CD4-positive, alpha-beta memory T cell (primary cell): ENCODE measurements at regions of chr1 and their contacts with region 1.

Region 1: GRCh38 chr1:41360993-41361753 is at the start of gene FOXO6:
- DNase-seq: peak; percentile 94 to 95 (median 95)
- H3K4me3 ChIP-seq: peak within 1 kb of the TSS; percentile 26 to 48
- H3K4me3 Mint-ChIP-seq: peak within 1 kb of the TSS; percentile 73 to 87 (median 79)
- H3K27ac ChIP-seq: peak within 1 kb of the TSS; percentile 11
- H3K27ac Mint-ChIP-seq: peak within 1 kb of the TSS; percentile 80 to 90 (median 86)
- H3K4me1 ChIP-seq: peaks cover 30% of the 10 kb centered on the region
- H3K4me1 Mint-ChIP-seq: peaks cover 6 to 36% (median 14%) of the 10 kb centered on the region in 4 donors
- H3K27me3 ChIP-seq: peaks cover 8% of the 10 kb centered on the region
- H3K27me3 Mint-ChIP-seq: peaks cover 7 to 11% of the 10 kb centered on the region in 2 donors
- total RNA-seq, gene FOXO6: not detected

Region 2: DNA sequence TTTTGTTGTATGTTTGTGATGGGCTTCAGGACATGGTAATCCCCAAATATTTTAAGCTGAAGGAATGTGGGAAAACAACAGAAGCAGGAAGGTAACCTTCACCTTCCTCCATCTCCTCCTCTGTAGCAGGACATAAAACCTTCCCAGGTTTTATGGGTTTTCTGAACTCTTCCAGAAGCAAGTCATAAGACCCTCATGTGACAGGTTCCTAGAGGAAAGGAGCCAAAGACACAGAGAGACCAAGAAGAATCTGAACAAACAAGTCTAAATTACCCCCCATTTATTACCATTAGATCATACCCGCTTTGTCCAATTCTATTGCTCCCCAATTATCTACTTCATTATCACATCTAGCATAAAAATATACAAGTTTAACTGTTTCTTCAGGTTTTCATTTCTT is 147.8 kb before region 1 on chr1:
- CTCF ChIA-PET with region 1: no interaction called
- POLR2A ChIA-PET with region 1: no interaction called
- intact Hi-C with region 1: no loop called
- DNase-seq: no peak
- H3K4me3 ChIP-seq: no peak overlapping the region
- H3K4me3 Mint-ChIP-seq: peak overlapping the region in 1 of 8 donors; percentile 35
- H3K27ac ChIP-seq: no peak overlapping the region
- H3K27ac Mint-ChIP-seq: peak overlapping the region in 1 of 7 donors; percentile 0
- H3K4me1 ChIP-seq: no peaks in the 10 kb centered on the region
- H3K4me1 Mint-ChIP-seq: peaks cover 9 to 24% (median 12%) of the 10 kb centered on the region in 4 donors
- H3K27me3 ChIP-seq: no peaks in the 10 kb centered on the region
- H3K27me3 Mint-ChIP-seq: no peaks in the 10 kb centered on the region

Region 3: GRCh38 chr1:41241782-41242341 is 119.3 kb before region 1 on chr1 and contains the start of gene SCMH1:
- CTCF ChIA-PET with region 1: no interaction called
- POLR2A ChIA-PET with region 1: no interaction called
- intact Hi-C with region 1: loop called (anchors 5 kb)
- DNase-seq: peak; percentile 50 to 69 (median 58)
- H3K4me3 ChIP-seq: peak within 1 kb of the TSS; percentile 31 to 51
- H3K4me3 Mint-ChIP-seq: peak within 1 kb of the TSS; percentile 84 to 91 (median 89)
- H3K27ac ChIP-seq: peak within 1 kb of the TSS; percentile 51
- H3K27ac Mint-ChIP-seq: peak within 1 kb of the TSS; percentile 86 to 95 (median 92)
- H3K4me1 ChIP-seq: peaks cover 20% of the 10 kb centered on the region
- H3K4me1 Mint-ChIP-seq: peaks cover 15 to 24% (median 20%) of the 10 kb centered on the region in 4 donors
- H3K27me3 ChIP-seq: no peaks in the 10 kb centered on the region
- H3K27me3 Mint-ChIP-seq: no peaks in the 10 kb centered on the region
- total RNA-seq, gene SCMH1: 19.7 to 27.3 TPM

Region 4: DNA sequence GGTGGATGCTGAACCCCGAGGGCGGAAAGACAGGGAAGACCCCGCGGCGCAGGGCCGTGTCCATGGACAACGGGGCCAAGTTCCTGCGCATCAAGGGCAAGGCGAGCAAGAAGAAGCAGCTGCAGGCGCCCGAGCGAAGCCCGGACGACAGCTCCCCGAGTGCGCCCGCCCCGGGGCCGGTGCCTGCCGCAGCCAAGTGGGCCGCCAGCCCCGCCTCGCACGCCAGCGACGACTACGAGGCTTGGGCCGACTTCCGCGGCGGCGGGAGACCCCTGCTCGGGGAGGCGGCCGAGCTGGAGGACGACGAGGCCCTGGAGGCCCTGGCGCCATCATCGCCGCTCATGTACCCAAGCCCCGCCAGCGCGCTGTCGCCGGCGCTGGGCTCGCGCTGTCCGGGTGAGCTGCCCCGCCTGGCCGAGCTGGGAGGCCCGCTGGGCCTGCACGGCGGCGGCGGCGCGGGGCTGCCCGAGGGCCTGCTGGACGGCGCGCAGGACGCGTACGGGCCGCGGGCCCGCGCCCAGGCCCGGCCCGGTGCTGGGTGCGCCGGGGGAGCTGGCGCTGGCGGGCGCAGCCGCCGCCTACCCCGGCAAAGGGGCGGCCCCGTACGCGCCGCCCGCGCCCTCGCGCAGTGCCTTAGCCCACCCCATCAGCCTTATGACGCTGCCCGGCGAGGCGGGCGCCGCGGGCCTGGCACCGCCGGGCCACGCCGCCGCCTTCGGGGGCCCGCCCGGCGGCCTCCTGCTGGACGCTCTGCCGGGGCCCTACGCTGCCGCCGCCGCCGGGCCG is 20.7 kb after region 1 on chr1:
- CTCF ChIA-PET with region 1: no interaction called
- POLR2A ChIA-PET with region 1: interaction called, 11 read pairs
- intact Hi-C with region 1: loop called (anchors 1 kb)
- DNase-seq: peak in 2 of 5 donors; percentile 28 to 35
- H3K4me3 ChIP-seq: no peak overlapping the region
- H3K4me3 Mint-ChIP-seq: peak overlapping the region; percentile 82 to 89 (median 86)
- H3K27ac ChIP-seq: no peak overlapping the region
- H3K27ac Mint-ChIP-seq: no peak overlapping the region
- H3K4me1 ChIP-seq: peaks cover 20% of the 10 kb centered on the region
- H3K4me1 Mint-ChIP-seq: peaks cover 7 to 25% (median 14%) of the 10 kb centered on the region in 4 donors
- H3K27me3 ChIP-seq: peaks cover 6% of the 10 kb centered on the region
- H3K27me3 Mint-ChIP-seq: peaks cover 42 to 49% of the 10 kb centered on the region in 2 donors

Region 5: DNA sequence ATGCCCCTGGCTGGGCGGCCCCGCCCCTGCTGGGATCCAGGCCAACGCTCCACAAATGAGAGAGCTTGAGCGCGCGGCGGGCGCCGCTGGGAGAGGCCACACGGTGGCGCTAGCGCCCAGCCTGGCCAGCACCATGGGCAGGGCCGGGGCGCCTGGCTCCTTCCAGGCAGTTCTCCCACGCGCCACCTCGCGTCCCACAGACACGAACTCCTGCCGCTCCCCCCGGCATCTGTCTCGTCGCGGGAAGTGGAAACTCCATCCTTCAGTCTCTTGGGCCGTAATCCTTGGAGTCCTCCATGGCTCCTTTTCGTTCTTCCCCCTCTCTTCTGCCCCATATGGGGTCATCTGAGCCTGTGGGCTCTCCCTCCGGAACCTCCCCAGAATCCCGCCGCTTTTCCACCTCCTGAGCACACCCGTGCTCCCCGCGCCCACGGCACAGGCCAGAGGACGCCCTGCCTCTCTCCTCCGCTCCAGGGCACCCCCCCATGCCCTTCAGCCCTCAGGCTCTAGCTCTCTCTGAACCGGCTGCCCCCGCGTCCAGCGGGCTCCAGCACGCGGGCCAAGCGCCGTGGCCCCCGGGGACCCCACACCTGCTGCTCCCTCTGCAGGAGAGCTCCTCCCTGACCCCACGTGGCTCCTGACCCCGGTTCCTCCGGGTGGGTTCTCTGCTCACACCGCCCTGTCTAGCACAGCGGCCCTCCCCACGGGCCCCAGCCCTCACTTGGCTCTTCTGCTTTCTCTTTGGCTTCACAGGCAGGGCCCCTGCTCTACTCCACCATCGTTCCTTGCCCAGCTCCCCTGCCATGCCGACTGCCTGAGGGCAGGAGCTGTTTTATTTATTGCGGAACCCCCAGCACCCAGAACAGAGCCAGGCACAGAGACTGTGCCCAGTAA is 155.2 kb after region 1 on chr1:
- CTCF ChIA-PET with region 1: no interaction called
- POLR2A ChIA-PET with region 1: no interaction called
- intact Hi-C with region 1: no loop called
- DNase-seq: peak; percentile 37 to 40 (median 38)
- H3K4me3 ChIP-seq: no peak overlapping the region
- H3K4me3 Mint-ChIP-seq: peak overlapping the region in 6 of 8 donors; percentile 17 to 65 (median 46)
- H3K27ac ChIP-seq: no peak overlapping the region
- H3K27ac Mint-ChIP-seq: peak overlapping the region in 1 of 7 donors; percentile 69
- H3K4me1 ChIP-seq: peaks cover 4% of the 10 kb centered on the region
- H3K4me1 Mint-ChIP-seq: peaks cover 0 to 6% (median 5%) of the 10 kb centered on the region in 4 donors
- H3K27me3 ChIP-seq: no peaks in the 10 kb centered on the region
- H3K27me3 Mint-ChIP-seq: no peaks in the 10 kb centered on the region

Region 6: GRCh38 chr1:42846257-42847110 is 1485.3 kb after region 1 on chr1 and contains the start of gene ZNF691:
- CTCF ChIA-PET with region 1: no interaction called
- POLR2A ChIA-PET with region 1: no interaction called
- intact Hi-C with region 1: loop called (anchors 5 kb)
- DNase-seq: peak; percentile 88 to 94 (median 89)
- H3K4me3 ChIP-seq: peak within 1 kb of the TSS; percentile 74 to 84
- H3K4me3 Mint-ChIP-seq: peak within 1 kb of the TSS; percentile 91 to 98 (median 96)
- H3K27ac ChIP-seq: peak within 1 kb of the TSS; percentile 72
- H3K27ac Mint-ChIP-seq: peak within 1 kb of the TSS; percentile 59 to 95 (median 86)
- H3K4me1 ChIP-seq: peaks cover 23% of the 10 kb centered on the region
- H3K4me1 Mint-ChIP-seq: peaks cover 27 to 38% (median 35%) of the 10 kb centered on the region in 4 donors
- H3K27me3 ChIP-seq: no peaks in the 10 kb centered on the region
- H3K27me3 Mint-ChIP-seq: no peaks in the 10 kb centered on the region
- total RNA-seq, gene ZNF691: 17.3 to 18.8 TPM